ENCODE measurements at regions of chr17 and their contacts with region 1.

Region 1: GRCh38 chr17:41665566-41666236 is 23.0 kb upstream of the EIF1 start:
- DNase-seq: peak; percentile 85 to 89 (median 88)
- H3K4me3 ChIP-seq: peak overlapping the region in 6 of 7 experiments; percentile 35 to 80 (median 60)
- H3K27ac ChIP-seq: peak overlapping the region; percentile 50 to 78
- H3K4me1 ChIP-seq: peaks cover 0 to 37% (median 30%) of the 10 kb centered on the region in 4 experiments
- H3K27me3 ChIP-seq: no peaks in the 10 kb centered on the region

Region 2: GRCh38 chr17:41548844-41549595 is 116.7 kb before region 1 on chr17:
- CTCF ChIA-PET with region 1: interaction called, 66 read pairs
- POLR2A ChIA-PET with region 1: no interaction called
- DNase-seq: peak; percentile 71 to 87 (median 85)
- H3K4me3 ChIP-seq: peak overlapping the region in 5 of 7 experiments; percentile 26 to 65 (median 58)
- H3K27ac ChIP-seq: no peak overlapping the region
- H3K4me1 ChIP-seq: peaks cover 0 to 23% (median 16%) of the 10 kb centered on the region in 4 experiments
- H3K27me3 ChIP-seq: peaks cover 0 to 6% (median 3%) of the 10 kb centered on the region in 5 experiments

Region 3: DNA sequence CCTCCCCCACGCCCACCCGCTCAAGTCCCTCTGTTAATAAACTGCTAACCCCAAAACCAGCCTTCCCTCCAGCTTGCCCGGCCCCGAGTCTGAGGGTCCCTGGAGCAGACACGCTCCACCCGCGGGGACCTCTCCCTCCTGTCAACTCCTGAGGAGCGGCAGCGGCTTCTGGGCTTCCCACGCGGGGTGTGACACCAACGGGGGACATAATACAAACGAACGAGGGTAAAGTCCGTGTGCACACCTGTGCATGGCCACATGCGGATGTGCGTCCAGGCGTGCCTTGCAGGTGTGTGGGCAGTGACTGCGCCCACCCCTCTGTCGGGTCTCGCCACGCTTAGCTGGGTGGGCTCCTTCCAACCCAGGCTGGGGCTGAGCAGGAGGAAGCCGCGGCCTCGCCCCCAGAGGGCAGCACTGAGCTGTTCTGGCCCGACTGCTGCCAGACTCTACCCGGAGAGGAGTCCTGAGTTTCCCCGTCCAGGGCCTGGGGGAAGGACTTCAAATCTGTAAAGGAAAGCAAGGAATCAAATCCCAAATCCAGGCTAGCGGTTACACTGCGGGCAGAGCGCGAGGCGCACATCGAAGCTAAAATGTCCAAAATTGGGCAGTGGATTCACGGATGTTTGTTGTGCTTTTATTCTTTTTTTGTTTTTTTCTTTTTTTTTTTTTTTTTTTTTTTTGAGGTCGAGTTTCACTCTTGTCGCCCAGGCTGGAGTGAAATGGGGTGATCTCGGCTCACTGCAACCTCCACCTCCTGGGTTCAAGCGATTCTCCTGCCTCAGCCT is 17.1 kb before region 1 on chr17:
- CTCF ChIA-PET with region 1: interaction called, 239 read pairs
- POLR2A ChIA-PET with region 1: interaction called, 4 read pairs
- DNase-seq: peak; percentile 79 to 85 (median 81)
- H3K4me3 ChIP-seq: peak overlapping the region; percentile 18 to 75 (median 46)
- H3K27ac ChIP-seq: no peak overlapping the region
- H3K4me1 ChIP-seq: peaks cover 0 to 34% (median 29%) of the 10 kb centered on the region in 4 experiments
- H3K27me3 ChIP-seq: no peaks in the 10 kb centered on the region

Region 4: GRCh38 chr17:41688699-41689496 is 23.2 kb after region 1 on chr17 and contains the start of gene EIF1:
- CTCF ChIA-PET with region 1: interaction called, 22 read pairs
- POLR2A ChIA-PET with region 1: interaction called, 30 read pairs
- DNase-seq: peak; percentile 99 to 100 (median 100)
- H3K4me3 ChIP-seq: peak within 1 kb of the TSS; percentile 52 to 96 (median 89)
- H3K27ac ChIP-seq: peak within 1 kb of the TSS; percentile 99 to 100
- H3K4me1 ChIP-seq: peaks cover 7 to 27% (median 26%) of the 10 kb centered on the region in 4 experiments
- H3K27me3 ChIP-seq: no peaks in the 10 kb centered on the region

Region 5: GRCh38 chr17:41750862-41751261 is 85.2 kb after region 1 on chr17:
- CTCF ChIA-PET with region 1: no interaction called
- POLR2A ChIA-PET with region 1: no interaction called
- DNase-seq: no peak
- H3K4me3 ChIP-seq: no peak overlapping the region
- H3K27ac ChIP-seq: no peak overlapping the region
- H3K4me1 ChIP-seq: no peaks in the 10 kb centered on the region
- H3K27me3 ChIP-seq: no peaks in the 10 kb centered on the region